Mammary epithelial cell (primary cell): ENCODE measurements at regions of chr3 and their contacts with region 1.

Region 1: GRCh38 chr3:132210476-132211346 is 106.5 kb upstream of the ACP3 start:
- DNase-seq: peak; percentile 41
- H3K4me3 ChIP-seq: no peak overlapping the region
- H3K27ac ChIP-seq: no peak overlapping the region
- H3K4me1 ChIP-seq: no peaks in the 10 kb centered on the region
- H3K27me3 ChIP-seq: no peaks in the 10 kb centered on the region
- CTCF ChIP-seq: peak; percentile 94 to 95

Region 2: GRCh38 chr3:131794766-131795388 is 415.8 kb before region 1 on chr3:
- CTCF ChIA-PET with region 1: no interaction called
- dilution Hi-C with region 1: no loop called
- in situ Hi-C with region 1: no loop called
- intact Hi-C with region 1: loop called (anchors 10 kb)
- DNase-seq: peak; percentile 29
- H3K4me3 ChIP-seq: no peak overlapping the region
- H3K27ac ChIP-seq: no peak overlapping the region
- H3K4me1 ChIP-seq: no peaks in the 10 kb centered on the region
- H3K27me3 ChIP-seq: no peaks in the 10 kb centered on the region
- CTCF ChIP-seq: peak; percentile 89 to 95

Region 3: DNA sequence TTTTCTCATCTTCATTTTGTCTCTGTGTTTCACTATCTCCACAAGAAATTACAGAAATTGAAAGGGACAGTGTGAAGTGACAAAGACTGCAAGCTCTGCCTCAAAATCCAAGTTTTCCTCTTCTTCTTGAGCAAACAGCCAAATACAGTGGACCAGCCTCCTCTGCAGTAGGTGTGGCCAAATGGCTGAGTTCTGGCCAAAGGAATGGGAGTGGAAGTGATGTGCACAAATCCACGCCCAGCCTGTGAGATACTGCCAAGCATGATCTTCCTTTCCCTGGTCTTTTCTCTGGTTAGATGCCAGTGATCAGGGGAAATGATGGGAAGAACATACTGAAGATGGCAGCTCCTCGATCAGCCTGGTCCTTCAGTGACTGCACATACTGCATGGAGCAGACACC is 64.9 kb before region 1 on chr3:
- CTCF ChIA-PET with region 1: no interaction called
- dilution Hi-C with region 1: no loop called
- in situ Hi-C with region 1: no loop called
- intact Hi-C with region 1: no loop called
- DNase-seq: no peak
- H3K4me3 ChIP-seq: no peak overlapping the region
- H3K27ac ChIP-seq: no peak overlapping the region
- H3K4me1 ChIP-seq: no peaks in the 10 kb centered on the region
- H3K27me3 ChIP-seq: no peaks in the 10 kb centered on the region
- CTCF ChIP-seq: no peak